Naive thymus-derived CD4-positive, alpha-beta T cell (primary cell): ENCODE measurements at regions of chr3 and their contacts with region 1.

Region 1: DNA sequence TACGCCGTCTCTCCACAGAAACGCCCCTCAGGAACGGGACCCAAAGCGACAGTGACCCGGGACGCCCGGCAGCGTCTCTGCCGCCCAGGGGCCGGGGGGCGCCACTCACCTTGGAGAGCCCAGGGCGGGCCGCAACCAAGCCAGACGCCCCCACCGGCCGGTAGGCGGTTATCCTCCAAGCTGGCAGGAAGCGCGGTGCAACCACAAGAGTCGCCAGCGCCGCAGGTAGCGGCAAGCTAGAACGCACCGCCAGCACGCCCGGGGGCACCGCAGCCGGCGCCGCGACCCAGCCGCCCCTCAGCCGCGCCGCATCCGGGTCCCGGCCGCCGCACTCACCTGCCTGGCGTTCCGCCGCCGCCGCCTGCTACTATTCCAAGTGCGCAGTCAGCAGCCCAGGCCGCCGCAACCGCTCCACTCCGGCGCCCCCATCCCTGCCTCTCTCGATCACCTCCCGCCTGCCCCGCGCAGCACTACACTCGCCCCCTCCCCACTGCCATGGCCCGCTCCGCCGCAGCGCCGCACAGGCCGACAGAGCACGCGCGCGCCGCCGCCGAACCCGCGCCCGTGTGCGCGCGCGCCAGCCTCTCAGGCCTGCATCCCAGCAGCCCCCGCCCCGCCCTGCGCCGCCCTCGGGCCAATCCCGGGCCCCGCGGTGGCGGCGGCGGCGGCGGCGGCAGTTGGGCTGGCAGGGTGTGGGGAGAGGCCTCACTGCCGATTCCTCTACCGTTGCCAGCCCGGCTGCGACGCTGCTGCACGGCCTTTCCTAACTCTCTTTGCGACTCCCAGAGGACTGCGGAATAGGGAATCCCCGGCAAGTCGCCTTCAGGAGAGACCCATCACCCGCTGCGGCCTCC is at the start of gene PIK3CB:
- DNase-seq: peak; percentile 80 to 92 (median 90)
- ATAC-seq: peak; percentile 93
- H3K4me3 ChIP-seq: peak within 1 kb of the TSS; percentile 90
- H3K4me3 Mint-ChIP-seq: peak within 1 kb of the TSS; percentile 84 to 100 (median 96)
- H3K27ac ChIP-seq: peak within 1 kb of the TSS; percentile 80
- H3K27ac Mint-ChIP-seq: peak within 1 kb of the TSS; percentile 90 to 100 (median 99)
- H3K4me1 ChIP-seq: peaks cover 16 to 21% of the 10 kb centered on the region in 2 donors
- H3K4me1 Mint-ChIP-seq: peaks cover 19 to 36% (median 26%) of the 10 kb centered on the region in 7 donors
- H3K27me3 ChIP-seq: no peaks in the 10 kb centered on the region
- H3K27me3 Mint-ChIP-seq: no peaks in the 10 kb centered on the region
- total RNA-seq, gene PIK3CB: 22.2 to 46.9 (median 38.3) TPM

Region 2: GRCh38 chr3:138186803-138187295 is 647.7 kb before region 1 on chr3:
- CTCF ChIA-PET with region 1: no interaction called
- POLR2A ChIA-PET with region 1: no interaction called
- intact Hi-C with region 1: loop called (anchors 5 kb)
- DNase-seq: peak; percentile 83 to 91 (median 87)
- ATAC-seq: peak; percentile 96
- H3K4me3 ChIP-seq: peak overlapping the region; percentile 98
- H3K4me3 Mint-ChIP-seq: peak overlapping the region; percentile 89 to 99 (median 97)
- H3K27ac ChIP-seq: peak overlapping the region; percentile 86
- H3K27ac Mint-ChIP-seq: peak overlapping the region; percentile 92 to 96 (median 93)
- H3K4me1 ChIP-seq: peaks cover 13 to 24% of the 10 kb centered on the region in 2 donors
- H3K4me1 Mint-ChIP-seq: peaks cover 32 to 54% (median 45%) of the 10 kb centered on the region in 7 donors
- H3K27me3 ChIP-seq: no peaks in the 10 kb centered on the region
- H3K27me3 Mint-ChIP-seq: peaks cover 0 to 19% (median 9%) of the 10 kb centered on the region in 5 donors

Region 3: DNA sequence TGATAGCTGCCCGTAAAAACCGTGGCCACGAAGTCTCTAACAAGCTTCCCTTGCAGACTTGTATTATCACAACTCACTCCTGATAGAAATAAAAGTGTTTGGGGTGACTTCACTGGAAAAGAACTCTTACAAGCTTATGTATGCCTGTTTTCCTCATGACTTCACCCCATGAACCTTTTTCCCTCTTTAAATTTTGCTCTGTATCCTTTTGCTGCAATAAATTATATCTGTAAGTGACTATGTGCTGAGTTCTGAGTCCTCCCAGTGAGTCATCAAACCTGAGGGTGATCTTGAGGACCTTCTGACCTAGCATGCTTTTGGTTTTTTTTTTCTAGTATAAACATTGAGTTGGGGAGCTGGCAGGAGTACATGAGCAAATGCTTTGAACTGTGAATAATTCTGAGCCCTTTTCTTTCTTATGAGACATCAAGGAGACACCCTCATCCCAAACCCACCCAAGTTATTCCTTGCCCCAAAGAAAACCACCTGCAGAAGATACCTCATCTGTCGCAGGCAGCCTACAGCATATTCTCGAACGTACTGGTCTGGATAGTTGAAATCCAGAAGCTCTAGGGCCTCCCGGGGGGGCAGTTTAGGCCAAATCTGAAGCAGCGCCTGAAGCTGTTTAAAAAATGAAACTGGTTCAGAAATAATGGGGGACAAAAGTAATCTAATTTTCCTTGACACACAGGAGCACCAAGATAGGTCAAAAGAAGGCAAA is 140.1 kb before region 1 on chr3:
- CTCF ChIA-PET with region 1: no interaction called
- POLR2A ChIA-PET with region 1: no interaction called
- intact Hi-C with region 1: loop called (anchors 2 to 5 kb)
- DNase-seq: no peak
- ATAC-seq: no peak
- H3K4me3 ChIP-seq: no peak overlapping the region
- H3K4me3 Mint-ChIP-seq: no peak overlapping the region
- H3K27ac ChIP-seq: no peak overlapping the region
- H3K27ac Mint-ChIP-seq: no peak overlapping the region
- H3K4me1 ChIP-seq: no peaks in the 10 kb centered on the region
- H3K4me1 Mint-ChIP-seq: peaks cover 0 to 4% (median 0%) of the 10 kb centered on the region in 7 donors
- H3K27me3 ChIP-seq: no peaks in the 10 kb centered on the region
- H3K27me3 Mint-ChIP-seq: no peaks in the 10 kb centered on the region

Region 4: GRCh38 chr3:138781012-138781470 is 53.5 kb before region 1 on chr3:
- CTCF ChIA-PET with region 1: no interaction called
- POLR2A ChIA-PET with region 1: interaction called, 4 read pairs
- intact Hi-C with region 1: loop called (anchors 1 kb)
- DNase-seq: peak in 7 of 9 donors; percentile 43 to 78 (median 66)
- ATAC-seq: peak; percentile 96
- H3K4me3 ChIP-seq: peak overlapping the region; percentile 16
- H3K4me3 Mint-ChIP-seq: peak overlapping the region; percentile 3 to 84 (median 72)
- H3K27ac ChIP-seq: peak overlapping the region; percentile 57
- H3K27ac Mint-ChIP-seq: peak overlapping the region; percentile 84 to 96 (median 87)
- H3K4me1 ChIP-seq: peaks cover 10 to 15% of the 10 kb centered on the region in 2 donors
- H3K4me1 Mint-ChIP-seq: peaks cover 19 to 56% (median 48%) of the 10 kb centered on the region in 7 donors
- H3K27me3 ChIP-seq: no peaks in the 10 kb centered on the region
- H3K27me3 Mint-ChIP-seq: no peaks in the 10 kb centered on the region

Region 5: GRCh38 chr3:139343895-139344856 is 509.6 kb after region 1 on chr3 and contains the start of gene MRPS22:
- CTCF ChIA-PET with region 1: no interaction called
- POLR2A ChIA-PET with region 1: no interaction called
- intact Hi-C with region 1: loop called in 1 of 2 experiments (anchors 5 kb)
- DNase-seq: peak; percentile 52 to 87 (median 85)
- ATAC-seq: peak; percentile 97
- H3K4me3 ChIP-seq: peak within 1 kb of the TSS; percentile 86
- H3K4me3 Mint-ChIP-seq: peak within 1 kb of the TSS in 2 of 10 donors; percentile 59 to 72
- H3K27ac ChIP-seq: peak within 1 kb of the TSS; percentile 88
- H3K27ac Mint-ChIP-seq: peak within 1 kb of the TSS in 3 of 9 donors; percentile 15 to 64 (median 31)
- H3K4me1 ChIP-seq: peaks cover 15% of the 10 kb centered on the region in 2 donors
- H3K4me1 Mint-ChIP-seq: peaks cover 7 to 19% (median 10%) of the 10 kb centered on the region in 7 donors
- H3K27me3 ChIP-seq: no peaks in the 10 kb centered on the region
- H3K27me3 Mint-ChIP-seq: peaks cover 0 to 9% (median 6%) of the 10 kb centered on the region in 5 donors
- total RNA-seq, gene MRPS22: 26.2 to 37.2 (median 36.3) TPM

Region 6: GRCh38 chr3:140528940-140529495 is 1694.4 kb after region 1 on chr3:
- CTCF ChIA-PET with region 1: no interaction called
- POLR2A ChIA-PET with region 1: no interaction called
- intact Hi-C with region 1: no loop called
- DNase-seq: no peak
- ATAC-seq: no peak
- H3K4me3 ChIP-seq: no peak overlapping the region
- H3K4me3 Mint-ChIP-seq: no peak overlapping the region
- H3K27ac ChIP-seq: no peak overlapping the region
- H3K27ac Mint-ChIP-seq: no peak overlapping the region
- H3K4me1 ChIP-seq: no peaks in the 10 kb centered on the region
- H3K4me1 Mint-ChIP-seq: no peaks in the 10 kb centered on the region
- H3K27me3 ChIP-seq: no peaks in the 10 kb centered on the region
- H3K27me3 Mint-ChIP-seq: peaks cover 0 to 18% (median 13%) of the 10 kb centered on the region in 5 donors